ENCODE measurements at regions of chr10 and their contacts with region 1.

Region 1: DNA sequence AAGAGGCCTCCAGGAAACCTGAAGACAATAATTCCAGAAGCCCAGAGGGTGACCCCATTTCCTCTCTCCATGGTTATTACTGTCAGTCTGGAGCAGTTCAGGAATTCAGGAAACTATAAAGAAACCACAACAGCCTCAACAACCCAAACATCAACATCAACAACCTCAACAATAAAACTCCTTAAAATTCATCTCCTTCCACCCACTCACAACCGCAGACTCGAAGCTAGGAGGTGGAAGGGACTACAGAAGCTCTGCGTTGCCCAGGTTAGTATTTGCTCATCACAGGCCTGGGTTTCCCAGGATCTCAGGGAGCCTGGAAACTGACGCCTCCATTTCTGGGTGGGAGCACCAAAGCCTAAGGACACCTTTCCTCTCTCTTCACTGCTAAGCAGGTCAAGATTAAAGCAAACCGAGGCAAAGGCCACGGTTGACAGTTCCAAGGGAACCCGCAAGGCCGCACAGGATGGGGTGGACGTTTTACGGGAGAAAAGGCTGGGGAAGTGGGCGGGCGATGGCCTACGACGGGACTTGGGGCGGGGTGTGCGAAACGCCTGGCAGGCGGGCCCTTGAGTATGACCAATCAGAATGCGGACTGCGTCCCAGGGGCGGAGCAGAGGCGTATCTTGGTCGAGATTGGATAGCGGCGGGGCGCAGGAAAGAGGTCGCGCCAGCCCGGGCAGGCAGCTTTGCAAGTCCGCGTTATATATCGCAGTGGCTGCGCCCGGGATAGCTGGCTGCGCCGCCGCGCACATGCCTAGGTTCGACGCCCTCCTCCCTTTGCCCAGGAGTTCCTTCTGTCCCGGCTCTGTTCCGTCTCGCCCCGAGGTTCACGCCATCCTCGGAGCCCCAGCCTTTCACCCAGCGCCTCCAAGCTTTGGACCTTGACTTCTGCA is at the start of gene ELOVL3:
- DNase-seq: peak; percentile 90
- H3K4me3 Mint-ChIP-seq: peak within 1 kb of the TSS; percentile 63
- H3K27ac Mint-ChIP-seq: peak within 1 kb of the TSS; percentile 44
- H3K4me1 Mint-ChIP-seq: peaks cover 26% of the 10 kb centered on the region
- H3K27me3 Mint-ChIP-seq: peaks cover 67% of the 10 kb centered on the region
- total RNA-seq, gene ELOVL3: not detected

Region 2: GRCh38 chr10:101814466-101815071 is 411.3 kb before region 1 on chr10:
- CTCF ChIA-PET with region 1: no interaction called
- POLR2A ChIA-PET with region 1: no interaction called
- DNase-seq: no peak
- H3K4me3 Mint-ChIP-seq: peak overlapping the region; percentile 96
- H3K27ac Mint-ChIP-seq: peak overlapping the region; percentile 82
- H3K4me1 Mint-ChIP-seq: peaks cover 46% of the 10 kb centered on the region
- H3K27me3 Mint-ChIP-seq: no peaks in the 10 kb centered on the region

Region 3: GRCh38 chr10:102064868-102065560 is 160.9 kb before region 1 on chr10 and contains the start of gene HPS6:
- CTCF ChIA-PET with region 1: no interaction called
- POLR2A ChIA-PET with region 1: no interaction called
- DNase-seq: peak; percentile 92
- H3K4me3 Mint-ChIP-seq: peak within 1 kb of the TSS; percentile 84
- H3K27ac Mint-ChIP-seq: peak within 1 kb of the TSS; percentile 83
- H3K4me1 Mint-ChIP-seq: peaks cover 32% of the 10 kb centered on the region
- H3K27me3 Mint-ChIP-seq: no peaks in the 10 kb centered on the region
- total RNA-seq, gene HPS6: 24.7 to 25.7 TPM

Region 4: DNA sequence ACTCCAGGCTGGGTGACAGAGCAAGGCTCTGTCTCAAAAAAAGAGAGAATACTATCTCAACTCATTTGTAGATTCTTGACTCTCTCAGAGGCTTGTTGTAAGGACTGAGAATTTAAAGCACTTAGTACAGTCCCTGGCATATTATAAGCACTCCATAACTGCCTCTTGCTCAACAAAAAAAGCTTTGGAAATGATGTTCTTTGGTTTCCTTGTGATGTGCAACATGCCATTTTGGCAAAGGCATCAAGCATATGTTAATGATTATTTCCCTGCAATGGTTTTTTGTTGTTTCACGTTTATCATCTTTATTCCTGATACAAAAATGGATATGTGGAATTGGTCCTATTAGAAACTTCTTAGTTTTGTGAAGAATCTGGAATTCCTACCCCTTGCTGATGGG is 58.0 kb before region 1 on chr10:
- CTCF ChIA-PET with region 1: interaction called, 90 read pairs
- POLR2A ChIA-PET with region 1: interaction called, 5 read pairs
- DNase-seq: no peak
- H3K4me3 Mint-ChIP-seq: no peak overlapping the region
- H3K27ac Mint-ChIP-seq: no peak overlapping the region
- H3K4me1 Mint-ChIP-seq: peaks cover 23% of the 10 kb centered on the region
- H3K27me3 Mint-ChIP-seq: peaks cover 4% of the 10 kb centered on the region

Region 5: DNA sequence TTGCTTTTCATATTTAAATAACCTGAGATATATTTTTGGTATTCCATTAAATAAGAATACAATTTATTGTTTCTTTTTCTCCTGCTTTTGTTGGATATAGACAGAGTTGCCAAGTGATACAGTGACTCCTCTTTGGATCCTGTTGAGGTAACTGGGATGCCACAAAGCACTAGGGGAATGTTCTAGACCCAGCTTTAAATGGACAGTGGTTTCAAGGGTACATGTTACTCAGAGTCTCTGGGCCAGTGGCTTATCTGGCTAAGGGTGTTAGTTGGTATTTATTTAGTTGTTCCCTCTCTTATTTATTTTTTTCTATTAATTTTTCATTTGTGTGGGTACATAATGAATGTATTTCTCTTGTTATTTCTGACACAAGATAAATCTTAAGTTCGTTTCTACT is 28.5 kb after region 1 on chr10:
- CTCF ChIA-PET with region 1: interaction called, 105 read pairs
- POLR2A ChIA-PET with region 1: interaction called, 3 read pairs
- DNase-seq: no peak
- H3K4me3 Mint-ChIP-seq: no peak overlapping the region
- H3K27ac Mint-ChIP-seq: no peak overlapping the region
- H3K4me1 Mint-ChIP-seq: peaks cover 5% of the 10 kb centered on the region
- H3K27me3 Mint-ChIP-seq: no peaks in the 10 kb centered on the region

Region 6: GRCh38 chr10:102334101-102334500 is 108.2 kb after region 1 on chr10:
- CTCF ChIA-PET with region 1: interaction called, 10 read pairs
- POLR2A ChIA-PET with region 1: no interaction called
- DNase-seq: no peak
- H3K4me3 Mint-ChIP-seq: no peak overlapping the region
- H3K27ac Mint-ChIP-seq: no peak overlapping the region
- H3K4me1 Mint-ChIP-seq: peaks cover 10% of the 10 kb centered on the region
- H3K27me3 Mint-ChIP-seq: no peaks in the 10 kb centered on the region

Region 7: GRCh38 chr10:102358712-102359382 is 133.0 kb after region 1 on chr10:
- CTCF ChIA-PET with region 1: interaction called, 593 read pairs
- POLR2A ChIA-PET with region 1: interaction called, 39 read pairs
- DNase-seq: no peak
- H3K4me3 Mint-ChIP-seq: no peak overlapping the region
- H3K27ac Mint-ChIP-seq: no peak overlapping the region
- H3K4me1 Mint-ChIP-seq: peaks cover 21% of the 10 kb centered on the region
- H3K27me3 Mint-ChIP-seq: no peaks in the 10 kb centered on the region

Region 8: DNA sequence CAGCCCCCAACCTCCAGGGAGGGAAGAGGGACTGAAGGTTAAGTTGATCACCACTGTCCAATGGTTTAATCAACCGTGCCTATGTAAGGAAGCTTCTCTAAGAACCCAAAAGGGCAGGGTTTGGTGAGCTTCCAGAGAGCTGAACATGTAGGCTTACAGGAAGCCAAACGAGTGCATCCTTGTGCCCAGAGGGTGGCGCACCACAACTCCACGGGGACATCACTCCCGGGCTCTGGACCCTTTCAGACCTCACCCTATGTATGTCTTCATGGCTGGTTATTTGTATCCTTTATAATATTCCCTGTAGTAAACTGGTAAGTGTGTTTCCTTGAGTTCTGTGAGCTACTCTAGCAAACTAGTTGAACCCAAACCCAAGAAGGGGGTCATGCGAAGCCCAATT is 158.2 kb after region 1 on chr10:
- CTCF ChIA-PET with region 1: interaction called, 10 read pairs
- POLR2A ChIA-PET with region 1: no interaction called
- DNase-seq: no peak
- H3K4me3 Mint-ChIP-seq: no peak overlapping the region
- H3K27ac Mint-ChIP-seq: no peak overlapping the region
- H3K4me1 Mint-ChIP-seq: no peaks in the 10 kb centered on the region
- H3K27me3 Mint-ChIP-seq: no peaks in the 10 kb centered on the region

Region 9: DNA sequence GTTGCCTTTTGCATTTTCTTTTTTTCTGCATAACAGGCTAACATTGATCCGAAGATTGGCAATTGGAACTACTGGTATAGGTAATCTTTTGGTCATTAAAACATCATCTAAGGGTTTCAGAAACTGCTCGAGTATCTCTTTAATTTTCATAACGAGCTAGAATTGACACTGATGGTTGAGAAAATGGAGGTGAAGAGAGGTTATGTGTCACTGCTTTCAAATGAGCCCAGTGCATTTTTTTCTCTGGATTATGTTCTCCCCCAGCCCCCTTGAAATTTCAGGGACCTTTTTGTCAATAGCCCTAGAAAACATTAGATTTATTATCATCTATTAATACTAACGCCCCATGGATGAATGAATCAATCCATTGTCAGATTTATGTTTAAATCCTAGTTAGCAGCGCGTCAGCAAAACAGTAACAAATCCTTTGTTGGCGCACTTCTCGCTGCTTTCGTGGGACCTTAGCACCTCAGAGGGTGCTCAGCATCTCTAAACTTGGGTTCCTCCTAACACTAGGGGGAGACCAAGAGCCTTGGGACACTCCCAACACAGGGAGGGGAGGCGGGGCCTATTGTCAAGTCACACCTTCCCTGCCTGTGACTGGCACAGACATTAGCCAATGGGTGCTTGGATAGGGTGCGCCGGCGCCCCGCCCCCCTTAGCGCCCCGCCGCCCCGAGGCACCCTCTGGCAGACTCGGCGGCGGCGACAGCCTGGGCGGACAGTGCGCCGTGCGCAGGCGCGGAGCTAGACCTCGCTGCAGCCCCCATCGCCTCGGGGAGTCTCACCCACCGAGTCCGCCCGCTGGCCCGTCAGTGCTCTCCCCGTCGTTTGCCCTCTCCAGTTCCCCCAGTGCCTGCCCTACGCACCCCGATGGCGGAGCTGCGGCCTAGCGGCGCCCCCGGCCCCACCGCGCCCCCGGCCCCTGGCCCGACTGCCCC is 277.7 kb after region 1 on chr10 and contains the start of gene SUFU:
- CTCF ChIA-PET with region 1: interaction called, 12 read pairs
- POLR2A ChIA-PET with region 1: no interaction called
- DNase-seq: peak; percentile 99
- H3K4me3 Mint-ChIP-seq: no peak within 1 kb of the TSS
- H3K27ac Mint-ChIP-seq: peak within 1 kb of the TSS; percentile 73
- H3K4me1 Mint-ChIP-seq: peaks cover 41% of the 10 kb centered on the region
- H3K27me3 Mint-ChIP-seq: no peaks in the 10 kb centered on the region
- total RNA-seq, gene SUFU: 18.0 to 19.6 TPM

Region 10: GRCh38 chr10:102555781-102556328 is 330.0 kb after region 1 on chr10:
- CTCF ChIA-PET with region 1: no interaction called
- POLR2A ChIA-PET with region 1: no interaction called
- DNase-seq: no peak
- H3K4me3 Mint-ChIP-seq: no peak overlapping the region
- H3K27ac Mint-ChIP-seq: no peak overlapping the region
- H3K4me1 Mint-ChIP-seq: peaks cover 12% of the 10 kb centered on the region
- H3K27me3 Mint-ChIP-seq: no peaks in the 10 kb centered on the region